Pancreas (tissue), 10 donors: ENCODE measurements at regions of chr4 and their contacts with region 1.

Region 1: DNA sequence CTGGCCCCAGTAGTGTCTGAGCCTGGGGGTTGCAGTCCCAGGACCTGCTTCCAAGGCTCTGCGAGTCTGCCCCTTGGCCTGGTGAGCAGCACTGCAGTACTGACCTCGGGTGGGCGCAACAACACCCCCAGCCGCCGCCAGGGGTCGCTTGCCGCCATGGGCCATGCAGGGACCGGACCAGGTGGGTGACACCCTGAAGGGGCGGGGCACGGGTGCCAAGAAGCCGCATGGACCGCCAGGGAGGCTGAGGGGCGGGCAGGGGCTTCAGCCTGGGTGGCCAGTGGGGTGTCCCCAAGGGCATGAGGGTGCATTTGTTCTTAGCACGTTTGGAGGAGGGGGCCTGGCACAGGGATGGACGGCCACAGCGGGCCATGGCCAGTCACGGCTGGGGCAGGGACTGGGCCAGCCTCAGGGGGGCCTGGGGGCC is 25.0 kb downstream of the TACC3 start:
- DNase-seq: peak in 5 of 6 donors; percentile 61 to 93 (median 78)
- ATAC-seq: peak; percentile 57 to 79 (median 78)
- H3K4me3 ChIP-seq: no peak overlapping the region
- H3K27ac ChIP-seq: peak overlapping the region in 1 of 4 donors; percentile 67
- H3K4me1 ChIP-seq: no peaks in the 10 kb centered on the region
- H3K27me3 ChIP-seq: no peaks in the 10 kb centered on the region
- CTCF ChIP-seq: peak; percentile 67 to 78 (median 76)

Region 2: DNA sequence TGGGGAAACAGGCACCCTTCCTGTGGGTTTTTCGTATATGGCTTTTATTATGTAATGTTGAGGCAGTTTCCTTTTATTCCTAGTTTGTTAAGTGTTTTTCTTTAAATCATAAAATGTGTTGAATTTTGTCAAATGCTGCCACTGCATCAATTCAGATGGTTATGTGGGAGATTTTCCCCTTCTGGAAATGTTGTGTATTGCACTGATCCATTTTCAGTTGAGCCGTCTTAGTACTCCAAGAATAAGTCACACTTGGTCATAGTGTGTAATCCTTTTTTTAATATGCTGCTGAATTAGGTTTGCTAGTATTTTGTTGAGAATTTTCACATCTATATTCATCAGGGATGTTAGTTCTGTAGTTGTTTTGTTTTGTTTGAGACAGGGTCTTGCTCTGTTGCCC is 487.8 kb before region 1 on chr4:
- intact Hi-C with region 1: no loop called
- DNase-seq: no peak
- ATAC-seq: no peak
- H3K4me3 ChIP-seq: no peak overlapping the region
- H3K27ac ChIP-seq: no peak overlapping the region
- H3K4me1 ChIP-seq: no peaks in the 10 kb centered on the region
- H3K27me3 ChIP-seq: no peaks in the 10 kb centered on the region
- CTCF ChIP-seq: no peak

Region 3: DNA sequence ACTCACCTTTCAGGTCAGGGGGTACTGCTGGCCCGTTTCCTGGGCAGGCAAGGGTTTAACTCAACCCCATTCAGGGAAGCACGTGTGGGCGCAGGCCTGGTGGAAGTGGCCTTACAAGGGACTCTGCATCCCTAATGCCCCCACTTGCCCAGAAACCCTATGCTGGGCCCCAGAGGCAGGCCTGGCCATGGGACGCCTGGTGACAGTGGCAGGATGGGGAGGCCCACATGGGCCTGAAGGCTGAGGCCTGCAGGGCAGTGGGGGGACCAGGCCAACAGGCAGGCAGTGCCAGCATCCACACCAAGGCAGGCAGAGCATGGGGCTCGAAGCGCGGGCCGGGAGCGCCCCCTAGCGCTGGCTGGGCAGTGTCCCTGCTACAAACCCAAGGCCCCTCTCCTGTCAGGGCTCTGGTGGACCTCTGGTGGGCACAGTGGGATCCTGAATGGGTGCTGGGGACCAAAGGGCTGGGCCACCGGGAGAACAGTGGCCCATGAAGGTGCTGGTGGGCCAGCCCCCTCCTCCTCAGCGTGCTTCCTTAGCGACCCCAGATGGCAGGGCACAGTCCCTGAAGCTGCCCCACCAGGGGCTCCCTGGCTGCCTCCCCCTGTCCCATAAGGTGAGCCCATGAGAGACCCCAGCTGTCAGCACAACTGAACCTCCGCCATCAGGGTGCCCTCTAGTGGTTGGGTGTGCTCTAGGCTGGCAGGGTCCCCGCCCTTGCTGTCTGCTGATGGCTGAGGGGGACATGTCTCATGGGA is 63.7 kb after region 1 on chr4:
- intact Hi-C with region 1: loop called in 2 of 3 experiments (anchors 5 kb)
- DNase-seq: peak; percentile 49 to 90 (median 80)
- ATAC-seq: peak; percentile 63 to 85 (median 80)
- H3K4me3 ChIP-seq: no peak overlapping the region
- H3K27ac ChIP-seq: no peak overlapping the region
- H3K4me1 ChIP-seq: peaks cover 0 to 5% (median 0%) of the 10 kb centered on the region in 3 donors
- H3K27me3 ChIP-seq: no peaks in the 10 kb centered on the region
- CTCF ChIP-seq: peak; percentile 61 to 89 (median 74)

Region 4: DNA sequence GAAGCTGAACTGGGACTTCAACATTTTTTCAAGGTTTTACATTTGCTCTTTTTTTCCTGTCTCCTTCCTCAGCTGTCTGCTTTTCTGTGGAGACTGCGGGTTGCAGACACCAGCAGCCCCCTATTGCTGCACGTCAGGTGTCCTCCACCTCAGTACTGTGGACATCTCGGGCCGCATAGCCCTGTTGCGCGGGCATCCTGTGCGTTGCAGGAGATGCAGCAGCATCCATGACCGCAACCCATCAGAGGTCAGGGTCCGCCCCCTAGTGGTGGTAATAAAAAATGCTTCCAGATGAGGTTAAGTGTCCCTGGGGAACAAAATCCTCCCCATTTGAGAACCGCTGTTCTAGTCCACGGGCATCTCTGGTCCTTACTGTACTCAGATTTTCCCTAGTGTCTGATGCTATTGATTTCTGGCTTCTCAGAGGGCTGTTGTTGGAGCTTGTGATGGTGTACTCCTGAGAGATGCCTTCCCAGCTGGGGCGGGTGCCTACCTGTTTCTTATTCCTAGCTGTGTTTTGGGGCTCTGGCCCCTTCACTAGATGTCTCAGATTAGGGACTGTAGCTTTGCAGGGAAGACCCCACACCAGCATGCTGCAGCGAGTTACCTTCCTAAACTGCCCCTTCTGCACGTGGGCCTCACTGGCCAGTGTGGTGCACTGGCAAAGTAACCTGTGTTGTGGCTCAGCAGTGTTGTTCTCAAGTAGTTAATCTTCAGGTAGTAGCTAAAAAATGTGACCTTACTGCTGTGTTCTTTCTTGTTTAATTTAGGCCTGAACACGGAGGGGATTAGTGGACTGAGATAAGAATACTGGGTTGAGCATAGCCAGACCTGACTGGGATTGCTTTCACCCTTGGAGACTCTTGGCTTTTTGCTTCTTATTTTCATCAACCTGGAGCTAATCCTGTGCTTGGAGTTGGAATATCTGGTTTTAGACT is 153.1 kb after region 1 on chr4:
- intact Hi-C with region 1: loop called in 2 of 3 experiments (anchors 5 kb)
- DNase-seq: peak; percentile 53 to 81 (median 71)
- ATAC-seq: peak; percentile 79 to 97 (median 96)
- H3K4me3 ChIP-seq: no peak overlapping the region
- H3K27ac ChIP-seq: no peak overlapping the region
- H3K4me1 ChIP-seq: no peaks in the 10 kb centered on the region
- H3K27me3 ChIP-seq: no peaks in the 10 kb centered on the region
- CTCF ChIP-seq: peak; percentile 78 to 89 (median 88)

Region 5: GRCh38 chr4:2186133-2186864 is 440.0 kb after region 1 on chr4:
- intact Hi-C with region 1: loop called in 1 of 3 experiments (anchors 10 kb)
- DNase-seq: peak in 4 of 6 donors; percentile 33 to 51 (median 35)
- ATAC-seq: peak; percentile 77 to 99 (median 94)
- H3K4me3 ChIP-seq: no peak overlapping the region
- H3K27ac ChIP-seq: no peak overlapping the region
- H3K4me1 ChIP-seq: no peaks in the 10 kb centered on the region
- H3K27me3 ChIP-seq: no peaks in the 10 kb centered on the region
- CTCF ChIP-seq: peak in 3 of 4 donors; percentile 16 to 37 (median 31)